Activated naive CD4-positive, alpha-beta T cell treated with anti-CD3 and anti-CD28 coated beads for 36 hours (primary cell): ENCODE measurements at regions of chr16 and their contacts with region 1.

Region 1: GRCh38 chr16:22272870-22273595 is 24.2 kb upstream of the POLR3E start:
- DNase-seq: no peak
- H3K4me3 Mint-ChIP-seq: no peak overlapping the region
- H3K27ac Mint-ChIP-seq: no peak overlapping the region
- H3K4me1 Mint-ChIP-seq: peaks cover 3% of the 10 kb centered on the region
- H3K27me3 Mint-ChIP-seq: no peaks in the 10 kb centered on the region

Region 2: GRCh38 chr16:22217889-22218730 is 54.9 kb before region 1 on chr16:
- CTCF ChIA-PET with region 1: no interaction called
- intact Hi-C with region 1: no loop called
- DNase-seq: peak; percentile 24
- H3K4me3 Mint-ChIP-seq: no peak overlapping the region
- H3K27ac Mint-ChIP-seq: no peak overlapping the region
- H3K4me1 Mint-ChIP-seq: peaks cover 13% of the 10 kb centered on the region
- H3K27me3 Mint-ChIP-seq: no peaks in the 10 kb centered on the region

Region 3: GRCh38 chr16:22232277-22233042 is 40.6 kb before region 1 on chr16:
- CTCF ChIA-PET with region 1: interaction called, 3 read pairs
- intact Hi-C with region 1: loop called (anchors 1 kb)
- DNase-seq: peak; percentile 66
- H3K4me3 Mint-ChIP-seq: no peak overlapping the region
- H3K27ac Mint-ChIP-seq: no peak overlapping the region
- H3K4me1 Mint-ChIP-seq: peaks cover 8% of the 10 kb centered on the region
- H3K27me3 Mint-ChIP-seq: no peaks in the 10 kb centered on the region